ENCODE measurements at regions of chr14 and their contacts with region 1.

Region 1: GRCh38 chr14:77862154-77862786 is 62.4 kb downstream of the ADCK1 start:
- DNase-seq: peak; percentile 84
- H3K4me3 ChIP-seq: peak overlapping the region in 1 of 2 experiments; percentile 40; a peak in 1 of 4 replicates
- H3K27ac ChIP-seq: no peak overlapping the region
- H3K4me1 ChIP-seq: no peaks in the 10 kb centered on the region; a peak in 1 of 4 replicates
- H3K27me3 ChIP-seq: no peaks in the 10 kb centered on the region
- CTCF ChIP-seq: peak; percentile 98
- EP300 ChIP-seq: no peak
- RAD21 ChIP-seq: peak; percentile 90

Region 2: DNA sequence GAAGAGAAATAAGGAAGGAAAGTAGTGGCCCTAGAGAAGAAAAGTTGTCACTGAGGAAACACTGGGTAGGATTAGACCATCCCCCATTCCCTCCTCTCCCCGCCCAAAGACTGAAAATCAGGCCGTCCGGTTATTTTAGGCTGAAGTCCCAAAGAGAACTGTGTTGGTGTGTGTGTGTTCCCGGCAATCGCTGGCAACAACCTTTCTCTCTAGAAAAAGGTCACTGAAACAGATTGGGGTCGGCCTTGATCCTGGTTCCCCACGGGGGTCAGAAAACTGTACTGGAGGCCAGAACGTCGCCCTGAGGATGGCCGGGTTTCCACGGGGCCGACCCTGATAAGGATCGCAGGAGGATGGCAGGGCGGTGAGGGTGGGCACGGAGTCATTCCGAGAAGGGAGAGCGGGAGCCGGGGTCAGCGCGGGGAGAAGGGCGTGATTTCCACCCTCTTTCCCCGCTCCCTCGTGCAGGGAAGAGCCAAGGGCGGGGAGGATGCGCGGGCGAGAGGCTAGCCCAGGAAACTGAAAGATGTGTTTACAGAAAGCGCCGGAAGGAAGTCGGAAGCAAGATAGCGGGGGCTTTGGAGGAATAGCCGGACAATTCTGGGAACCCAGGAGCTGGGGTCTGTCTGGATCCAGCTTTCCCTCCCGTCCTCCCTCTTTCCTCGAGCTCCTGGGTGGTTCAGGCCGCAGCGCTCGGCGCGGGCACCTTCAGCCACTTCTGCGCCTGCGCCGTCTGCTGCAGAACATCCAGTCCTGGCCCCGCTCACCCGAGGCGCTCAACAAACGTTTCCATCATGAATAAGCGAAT is 220.5 kb before region 1 on chr14:
- CTCF ChIA-PET with region 1: no interaction called
- POLR2A ChIA-PET with region 1: no interaction called
- DNase-seq: no peak
- H3K4me3 ChIP-seq: no peak overlapping the region
- H3K27ac ChIP-seq: peak overlapping the region in 1 of 2 experiments; percentile 93; a peak in 1 of 4 replicates
- H3K4me1 ChIP-seq: 0 out of 4 replicates have a peak, but pooled peaks cover 0 to 3% of the 10 kb centered on the region in 2 experiments
- H3K27me3 ChIP-seq: no peaks in the 10 kb centered on the region
- CTCF ChIP-seq: no peak
- EP300 ChIP-seq: no peak
- RAD21 ChIP-seq: no peak

Region 3: GRCh38 chr14:77838831-77839511 is 23.3 kb before region 1 on chr14:
- CTCF ChIA-PET with region 1: interaction called, 10 read pairs
- POLR2A ChIA-PET with region 1: no interaction called
- DNase-seq: no peak
- H3K4me3 ChIP-seq: no peak overlapping the region
- H3K27ac ChIP-seq: no peak overlapping the region
- H3K4me1 ChIP-seq: no peaks in the 10 kb centered on the region; a peak in 1 of 4 replicates
- H3K27me3 ChIP-seq: no peaks in the 10 kb centered on the region
- CTCF ChIP-seq: no peak
- EP300 ChIP-seq: no peak
- RAD21 ChIP-seq: no peak

Region 4: DNA sequence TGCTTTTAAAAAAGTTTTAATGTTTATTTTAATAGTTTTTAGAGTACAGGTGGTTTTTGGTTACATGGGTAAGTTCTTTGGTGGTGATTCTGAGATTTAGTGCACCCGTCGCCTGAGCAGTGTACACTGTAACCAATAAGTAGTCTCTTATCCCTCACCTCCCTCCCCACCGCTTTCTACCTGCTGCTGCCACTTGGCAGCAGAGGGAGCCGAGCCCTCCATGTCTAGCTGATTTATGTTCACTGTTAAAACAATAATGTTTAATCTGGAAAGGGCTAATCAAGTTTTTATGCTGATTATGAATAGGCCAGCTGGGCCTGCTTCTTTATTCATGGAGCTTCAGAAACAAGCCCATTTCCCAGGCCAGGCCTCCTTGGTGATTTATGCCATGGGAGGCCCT is 10.7 kb after region 1 on chr14:
- CTCF ChIA-PET with region 1: interaction called, 29 read pairs
- POLR2A ChIA-PET with region 1: no interaction called
- DNase-seq: no peak
- H3K4me3 ChIP-seq: no peak overlapping the region
- H3K27ac ChIP-seq: no peak overlapping the region
- H3K4me1 ChIP-seq: peaks cover 0 to 4% of the 10 kb centered on the region in 2 experiments; a peak in 1 of 4 replicates
- H3K27me3 ChIP-seq: no peaks in the 10 kb centered on the region
- CTCF ChIP-seq: no peak
- EP300 ChIP-seq: no peak
- RAD21 ChIP-seq: peak; percentile 26; the same call in 1 of the 2 replicates

Region 5: GRCh38 chr14:77880056-77880455 is 17.8 kb after region 1 on chr14:
- CTCF ChIA-PET with region 1: interaction called, 10 read pairs
- POLR2A ChIA-PET with region 1: no interaction called
- DNase-seq: no peak
- H3K4me3 ChIP-seq: no peak overlapping the region
- H3K27ac ChIP-seq: no peak overlapping the region; a peak in 1 of 4 replicates
- H3K4me1 ChIP-seq: peaks cover 0 to 62% of the 10 kb centered on the region in 2 experiments; a peak in 2 of 4 replicates
- H3K27me3 ChIP-seq: no peaks in the 10 kb centered on the region
- CTCF ChIP-seq: no peak
- EP300 ChIP-seq: no peak
- RAD21 ChIP-seq: no peak

Region 6: DNA sequence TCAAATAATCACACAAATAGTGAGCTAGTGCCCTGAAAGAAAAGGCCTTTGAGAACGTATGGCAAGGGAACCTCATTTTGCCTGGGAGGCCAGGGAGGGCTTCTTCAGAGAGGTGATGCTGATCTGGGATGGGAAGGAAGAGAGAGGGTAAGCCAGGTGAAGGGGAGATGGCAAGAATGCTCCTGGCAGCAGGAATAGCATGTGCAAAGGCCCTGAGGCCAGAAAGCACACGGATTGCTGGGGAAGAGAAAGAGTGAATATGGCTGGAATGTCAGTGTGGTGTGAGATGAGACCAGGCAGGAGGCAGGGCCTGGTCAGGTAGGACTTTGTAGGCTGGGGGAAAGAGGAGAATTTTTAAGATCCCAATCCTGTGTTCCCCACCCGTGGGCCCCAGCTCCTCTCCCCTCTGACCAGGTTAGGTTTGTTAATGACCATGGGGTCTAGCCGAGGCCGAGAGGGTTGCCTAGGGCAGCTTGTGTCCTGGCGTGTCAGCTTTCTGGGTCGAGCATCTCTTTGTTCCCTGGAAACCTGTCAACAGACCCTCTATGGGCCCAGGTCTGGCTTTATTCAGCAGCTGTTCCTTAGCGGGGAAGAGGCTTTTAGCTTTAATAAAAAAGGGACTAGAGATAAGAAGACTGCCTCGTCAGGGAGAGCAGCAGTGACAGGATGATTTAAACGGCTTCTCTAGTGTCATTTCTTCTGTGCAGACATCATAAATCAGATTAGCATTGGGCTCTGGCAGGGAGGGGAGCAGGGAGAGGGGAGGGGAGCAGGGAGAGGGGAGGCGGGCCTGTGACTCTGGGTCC is 61.1 kb after region 1 on chr14:
- CTCF ChIA-PET with region 1: interaction called, 11 read pairs
- POLR2A ChIA-PET with region 1: no interaction called
- DNase-seq: peak; percentile 80
- H3K4me3 ChIP-seq: no peak overlapping the region
- H3K27ac ChIP-seq: peak overlapping the region in 1 of 2 experiments; percentile 98; a peak in 2 of 4 replicates
- H3K4me1 ChIP-seq: peaks cover 0 to 57% of the 10 kb centered on the region in 2 experiments; a peak in 2 of 4 replicates
- H3K27me3 ChIP-seq: no peaks in the 10 kb centered on the region
- CTCF ChIP-seq: no peak
- EP300 ChIP-seq: peak in 1 of 2 experiments; percentile 91; a peak in 2 of 4 replicates
- RAD21 ChIP-seq: peak; percentile 24; the same call in 1 of the 2 replicates

Region 7: DNA sequence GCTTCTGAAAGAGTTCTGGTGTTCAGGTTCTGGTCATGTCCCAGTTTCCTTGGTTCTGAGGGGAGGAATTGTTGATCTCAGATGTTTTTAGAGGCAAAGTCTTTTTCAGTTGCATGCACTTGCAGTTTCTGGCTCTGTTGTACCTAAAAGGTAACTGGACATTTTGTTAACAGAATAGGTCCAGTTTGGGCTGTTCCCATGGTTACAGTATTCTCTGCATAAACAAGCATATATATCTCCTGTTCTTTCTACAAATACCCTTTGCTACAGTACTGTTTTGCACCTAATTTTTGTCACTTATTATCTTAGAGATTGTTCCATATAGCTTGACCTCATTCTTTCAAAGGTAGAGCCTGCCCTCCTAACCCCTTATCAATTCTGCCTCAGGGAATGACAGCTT is 174.9 kb after region 1 on chr14:
- CTCF ChIA-PET with region 1: no interaction called
- POLR2A ChIA-PET with region 1: no interaction called
- DNase-seq: no peak
- H3K4me3 ChIP-seq: no peak overlapping the region
- H3K27ac ChIP-seq: no peak overlapping the region
- H3K4me1 ChIP-seq: no peaks in the 10 kb centered on the region
- H3K27me3 ChIP-seq: no peaks in the 10 kb centered on the region
- CTCF ChIP-seq: no peak
- EP300 ChIP-seq: no peak
- RAD21 ChIP-seq: no peak

Region 8: DNA sequence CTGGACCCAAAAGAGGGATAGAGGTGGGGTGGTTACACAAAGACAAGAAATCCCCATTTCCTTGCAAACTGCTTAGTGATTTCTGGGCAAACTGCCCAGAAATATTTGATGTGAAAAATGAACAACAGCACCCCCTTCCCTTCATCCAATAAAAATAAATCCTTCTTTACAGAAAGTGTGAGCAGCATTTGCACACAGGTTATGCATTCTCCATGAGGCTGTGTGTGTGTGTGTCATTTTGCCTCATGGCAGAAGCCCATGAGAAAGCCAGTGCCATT is 290.7 kb after region 1 on chr14:
- CTCF ChIA-PET with region 1: interaction called, 15 read pairs
- POLR2A ChIA-PET with region 1: no interaction called
- DNase-seq: no peak
- H3K4me3 ChIP-seq: no peak overlapping the region
- H3K27ac ChIP-seq: no peak overlapping the region
- H3K4me1 ChIP-seq: peaks cover 0 to 9% of the 10 kb centered on the region in 2 experiments; a peak in 1 of 4 replicates
- H3K27me3 ChIP-seq: no peaks in the 10 kb centered on the region
- CTCF ChIP-seq: no peak
- EP300 ChIP-seq: no peak
- RAD21 ChIP-seq: peak; percentile 55

Measured in SK-N-SH (cell line).